Activated CD8-positive, alpha-beta memory T cell treated with anti-CD3 and anti-CD28 coated beads, Interleukin-2, amount 10 ng/mL, durations not matched to agents 7 days and 5 days (primary cell): ENCODE measurements at regions of chr14 and their contacts with region 1.

Region 1: GRCh38 chr14:24289649-24290249 is 9.8 kb downstream of the DHRS1 start:
- DNase-seq: peak; percentile 88
- ATAC-seq: peak; percentile 93
- H3K4me3 Mint-ChIP-seq: no peak overlapping the region
- H3K27ac Mint-ChIP-seq: no peak overlapping the region
- H3K4me1 Mint-ChIP-seq: peaks cover 29% of the 10 kb centered on the region
- H3K27me3 Mint-ChIP-seq: peaks cover 25% of the 10 kb centered on the region

Region 2: GRCh38 chr14:24271134-24271833 is 18.5 kb before region 1 on chr14 and contains the start of gene RABGGTA:
- CTCF ChIA-PET with region 1: interaction called, 108 read pairs
- DNase-seq: peak; percentile 92
- ATAC-seq: peak; percentile 92
- H3K4me3 Mint-ChIP-seq: peak within 1 kb of the TSS; percentile 84
- H3K27ac Mint-ChIP-seq: peak within 1 kb of the TSS; percentile 93
- H3K4me1 Mint-ChIP-seq: peaks cover 41% of the 10 kb centered on the region
- H3K27me3 Mint-ChIP-seq: no peaks in the 10 kb centered on the region
- total RNA-seq, gene RABGGTA: 34.3 to 44.6 TPM

Region 3: DNA sequence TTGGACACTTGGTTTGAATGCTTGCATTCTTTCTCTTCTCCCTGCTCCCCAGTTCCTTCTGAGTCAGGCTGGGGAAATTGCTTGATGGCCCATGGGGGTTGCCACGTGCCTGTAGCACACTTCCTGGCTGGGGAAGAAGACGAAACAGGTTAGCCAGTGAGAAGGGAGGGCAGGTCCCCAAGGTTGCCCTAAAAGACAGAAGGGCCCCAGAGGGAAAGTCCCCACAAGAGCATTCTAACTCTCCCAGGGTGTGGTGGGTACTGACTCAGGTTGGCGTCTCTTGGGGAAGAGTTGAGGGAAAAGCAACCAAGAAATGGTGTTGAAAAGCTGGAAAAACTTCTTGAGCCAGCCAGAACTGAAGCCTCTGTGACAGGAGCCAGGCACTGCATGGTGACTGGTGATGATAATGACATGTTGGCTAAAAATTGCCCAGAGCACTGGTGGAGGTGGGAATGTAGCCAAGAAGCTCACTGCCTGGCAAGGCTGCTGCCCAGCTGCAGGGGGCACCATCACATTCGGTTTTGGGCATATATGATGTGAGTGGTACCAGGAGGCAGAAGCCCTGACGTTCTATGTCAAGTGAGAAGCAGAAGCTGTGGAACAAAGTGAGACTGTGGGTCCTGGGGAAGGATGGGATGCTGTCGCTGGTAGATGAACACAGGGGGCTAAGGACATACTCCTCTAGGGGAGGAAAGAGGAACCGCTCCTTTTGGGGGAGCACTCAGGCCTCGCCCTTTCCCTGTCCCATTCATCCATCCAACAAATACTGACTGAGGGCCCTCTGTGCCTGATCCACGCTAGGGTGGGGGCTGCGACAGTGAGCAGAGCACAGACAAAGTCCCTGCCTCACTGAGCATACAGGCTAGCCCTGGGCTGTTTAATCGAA is 10.2 kb before region 1 on chr14:
- CTCF ChIA-PET with region 1: interaction called, 108 read pairs
- DNase-seq: peak; percentile 53
- ATAC-seq: peak; percentile 67
- H3K4me3 Mint-ChIP-seq: no peak overlapping the region
- H3K27ac Mint-ChIP-seq: no peak overlapping the region
- H3K4me1 Mint-ChIP-seq: peaks cover 25% of the 10 kb centered on the region
- H3K27me3 Mint-ChIP-seq: no peaks in the 10 kb centered on the region

Region 4: DNA sequence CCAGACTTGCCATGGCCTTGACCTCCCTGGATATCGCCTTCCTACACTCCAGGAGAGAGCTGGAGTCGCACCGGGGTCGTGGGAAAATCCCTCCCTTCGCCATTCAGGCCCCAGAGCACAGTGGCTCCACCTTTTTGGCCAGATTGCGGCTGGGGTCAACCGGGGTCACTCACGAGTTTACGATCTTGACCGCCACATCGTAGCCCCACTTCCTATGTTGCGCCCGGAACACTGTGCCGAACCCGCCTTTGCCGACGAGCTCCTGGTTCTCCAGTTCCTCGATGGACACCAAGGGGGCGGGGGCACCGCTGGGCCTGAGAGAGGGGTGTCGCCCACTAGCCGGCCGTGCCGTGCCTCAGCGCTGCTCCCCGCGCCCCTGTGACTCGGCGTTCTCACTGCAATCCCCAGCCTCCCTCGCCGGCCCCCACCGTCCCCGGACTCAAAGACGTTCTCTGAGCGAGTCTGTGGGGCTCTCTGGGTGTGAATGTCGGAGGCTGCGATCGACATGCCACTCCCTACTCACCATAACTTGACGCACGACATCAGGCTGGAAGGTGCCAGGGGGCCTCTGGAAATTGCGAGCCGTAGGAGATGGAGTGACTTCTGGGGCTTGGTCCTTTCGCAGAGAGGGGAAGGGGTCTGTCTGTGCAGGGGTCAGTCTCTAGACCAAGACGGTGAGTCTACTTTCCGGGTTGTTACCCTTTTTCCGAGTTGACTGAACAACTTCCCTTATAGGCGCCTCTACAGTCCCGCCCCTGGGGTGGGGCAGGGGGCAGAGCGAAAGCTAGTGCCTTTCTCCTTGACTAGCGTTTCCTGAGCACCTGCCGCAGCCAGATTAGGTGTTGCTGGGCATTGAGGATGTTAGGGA is 49.8 kb after region 1 on chr14 and contains the start of gene RIPK3:
- CTCF ChIA-PET with region 1: no interaction called
- DNase-seq: peak; percentile 86
- ATAC-seq: peak; percentile 94
- H3K4me3 Mint-ChIP-seq: peak within 1 kb of the TSS; percentile 91
- H3K27ac Mint-ChIP-seq: peak within 1 kb of the TSS; percentile 88
- H3K4me1 Mint-ChIP-seq: peaks cover 33% of the 10 kb centered on the region
- H3K27me3 Mint-ChIP-seq: peaks cover 25% of the 10 kb centered on the region
- total RNA-seq, gene RIPK3: 22.9 to 29.4 TPM